A673 (cell line): ENCODE measurements at regions of chr3 and their contacts with region 1.

Region 1: GRCh38 chr3:136956994-136957393 is 789 bp upstream of the IL20RB start:
- DNase-seq: no peak
- H3K4me3 ChIP-seq: no peak overlapping the region
- H3K27ac ChIP-seq: peak overlapping the region; percentile 54
- H3K4me1 ChIP-seq: peaks cover 18% of the 10 kb centered on the region
- H3K27me3 ChIP-seq: no peaks in the 10 kb centered on the region
- CTCF ChIP-seq: no peak

Region 2: DNA sequence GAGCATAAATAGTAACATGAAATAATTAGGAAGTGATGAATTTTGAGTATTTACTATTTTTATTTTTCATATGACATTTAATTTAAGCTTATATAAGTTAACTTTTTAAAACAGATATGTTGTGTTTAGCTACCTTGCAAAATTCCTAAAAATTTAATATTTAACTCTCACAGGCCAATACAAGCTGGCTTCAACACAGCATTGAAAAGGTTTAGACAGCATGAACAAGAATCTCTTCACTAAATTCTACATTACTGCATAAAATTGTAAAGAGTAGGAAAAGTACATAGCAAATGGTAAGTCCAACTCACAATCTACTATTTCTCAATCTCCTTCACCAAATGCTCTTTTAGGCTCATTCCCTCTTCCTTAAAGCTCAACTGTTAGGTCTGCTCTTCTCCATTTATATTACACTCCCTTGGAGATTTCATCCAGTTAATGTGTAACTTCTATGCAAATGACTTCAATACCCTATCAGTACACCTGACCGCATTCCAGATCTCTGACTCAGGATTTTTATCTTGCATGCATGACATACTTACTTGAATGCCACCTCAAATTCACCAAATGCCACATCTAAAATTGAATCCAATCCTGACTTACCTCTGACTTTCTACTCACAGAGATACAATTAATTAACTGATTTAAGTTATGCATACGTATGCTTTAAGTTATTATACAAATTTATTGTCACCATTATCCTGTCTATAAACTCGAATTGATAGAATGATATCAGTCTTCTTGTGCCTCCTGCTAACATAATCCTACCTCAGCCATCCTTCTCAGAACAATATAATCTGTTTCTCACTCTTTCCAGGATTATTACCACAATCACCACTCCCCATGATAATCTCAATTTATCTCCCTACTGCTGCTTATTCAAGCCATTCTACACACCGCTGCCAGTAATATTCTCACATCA is 331.8 kb before region 1 on chr3:
- CTCF ChIA-PET with region 1: no interaction called
- POLR2A ChIA-PET with region 1: no interaction called
- intact Hi-C with region 1: no loop called
- DNase-seq: no peak
- H3K4me3 ChIP-seq: no peak overlapping the region
- H3K27ac ChIP-seq: no peak overlapping the region
- H3K4me1 ChIP-seq: peaks cover 4% of the 10 kb centered on the region
- H3K27me3 ChIP-seq: no peaks in the 10 kb centered on the region
- CTCF ChIP-seq: no peak

Region 3: DNA sequence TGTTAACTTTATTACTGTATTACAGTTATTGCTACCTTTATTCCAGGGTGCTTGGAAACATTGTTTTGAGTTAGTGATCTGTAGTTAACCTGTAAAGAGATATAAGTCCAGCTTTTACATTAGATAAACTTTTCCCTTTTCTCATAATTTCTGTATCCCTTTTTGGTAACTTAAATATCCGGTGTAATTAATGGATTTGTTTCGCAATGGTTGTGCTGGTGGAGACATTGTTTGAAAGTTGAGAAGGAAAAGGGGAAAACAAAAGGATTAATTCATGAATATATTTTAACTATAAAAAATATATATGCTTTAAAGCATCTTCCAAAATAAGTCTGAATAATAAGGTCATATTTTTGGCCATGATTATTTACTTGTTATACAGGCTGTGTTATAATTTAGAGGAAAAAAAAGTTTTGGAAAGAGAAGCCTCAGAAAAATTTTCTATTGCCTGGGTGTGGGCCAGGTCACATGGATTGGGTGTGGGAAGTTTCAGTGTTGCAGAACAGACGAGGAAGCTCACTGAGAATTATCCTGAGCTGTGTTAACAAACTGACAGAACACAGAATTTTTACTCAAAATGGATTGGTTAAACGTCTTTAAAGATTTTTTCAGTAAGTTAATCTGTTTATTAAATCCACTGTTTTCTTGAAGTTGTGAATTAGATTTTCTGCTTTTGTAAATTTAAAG is 26.9 kb before region 1 on chr3:
- CTCF ChIA-PET with region 1: no interaction called
- POLR2A ChIA-PET with region 1: interaction called, 12 read pairs
- intact Hi-C with region 1: no loop called
- DNase-seq: peak; percentile 77
- H3K4me3 ChIP-seq: peak overlapping the region; percentile 26
- H3K27ac ChIP-seq: peak overlapping the region; percentile 71
- H3K4me1 ChIP-seq: peaks cover 50% of the 10 kb centered on the region
- H3K27me3 ChIP-seq: no peaks in the 10 kb centered on the region
- CTCF ChIP-seq: no peak